ENCODE measurements at regions of chr4 and their contacts with region 1.

Region 1: GRCh38 chr4:24856586-24856985 is 56.3 kb downstream of the CCDC149 start:
- DNase-seq: peak; percentile 67
- ATAC-seq: no peak
- H3K4me3 ChIP-seq: no peak overlapping the region
- H3K27ac ChIP-seq: no peak overlapping the region
- H3K4me1 ChIP-seq: peaks cover 10% of the 10 kb centered on the region
- H3K27me3 ChIP-seq: no peaks in the 10 kb centered on the region
- CTCF ChIP-seq: no peak
- POLR2A ChIP-seq: no peak
- RAD21 ChIP-seq: no peak

Region 2: GRCh38 chr4:23894021-23894420 is 962.6 kb before region 1 on chr4:
- CTCF ChIA-PET with region 1: no interaction called
- POLR2A ChIA-PET with region 1: no interaction called
- dilution Hi-C with region 1: no loop called
- in situ Hi-C with region 1: no loop called
- intact Hi-C with region 1: no loop called
- DNase-seq: no peak
- ATAC-seq: no peak
- H3K4me3 ChIP-seq: no peak overlapping the region
- H3K27ac ChIP-seq: no peak overlapping the region
- H3K4me1 ChIP-seq: peaks cover 4% of the 10 kb centered on the region
- H3K27me3 ChIP-seq: no peaks in the 10 kb centered on the region
- CTCF ChIP-seq: no peak
- POLR2A ChIP-seq: no peak
- RAD21 ChIP-seq: no peak

Region 3: GRCh38 chr4:25376754-25377571 is 520.4 kb after region 1 on chr4 and contains the start of gene ANAPC4:
- CTCF ChIA-PET with region 1: no interaction called
- POLR2A ChIA-PET with region 1: no interaction called
- dilution Hi-C with region 1: no loop called
- in situ Hi-C with region 1: no loop called
- intact Hi-C with region 1: loop called (anchors 10 kb)
- DNase-seq: peak; percentile 82
- ATAC-seq: peak; percentile 96
- H3K4me3 ChIP-seq: peak within 1 kb of the TSS; percentile 99
- H3K27ac ChIP-seq: peak within 1 kb of the TSS; percentile 73
- H3K4me1 ChIP-seq: peaks cover 5% of the 10 kb centered on the region
- H3K27me3 ChIP-seq: no peaks in the 10 kb centered on the region
- CTCF ChIP-seq: 0 out of 2 replicates have a peak, but pooled peaks have one; percentile 11
- POLR2A ChIP-seq: no peak; the same call in 1 of the 2 replicates
- RAD21 ChIP-seq: no peak
- total RNA-seq, gene ANAPC4: 18.3 and 23.3 TPM in 2 replicates